ENCODE measurements at regions of chr16 and their contacts with region 1.

Region 1: GRCh38 chr16:19210280-19210924 is 42.4 kb downstream of the SYT17 start:
- DNase-seq: peak; percentile 89
- H3K4me3 ChIP-seq: peak overlapping the region; percentile 65
- H3K27ac ChIP-seq: peak overlapping the region; percentile 99
- H3K4me1 ChIP-seq: peaks cover 50% of the 10 kb centered on the region
- CTCF ChIP-seq: peak; percentile 60

Region 2: GRCh38 chr16:19316846-19317245 is 106.4 kb after region 1 on chr16:
- CTCF ChIA-PET with region 1: no interaction called
- POLR2A ChIA-PET with region 1: no interaction called
- intact Hi-C with region 1: no loop called
- DNase-seq: no peak
- H3K4me3 ChIP-seq: no peak overlapping the region
- H3K27ac ChIP-seq: no peak overlapping the region
- H3K4me1 ChIP-seq: no peaks in the 10 kb centered on the region
- CTCF ChIP-seq: no peak

Region 3: DNA sequence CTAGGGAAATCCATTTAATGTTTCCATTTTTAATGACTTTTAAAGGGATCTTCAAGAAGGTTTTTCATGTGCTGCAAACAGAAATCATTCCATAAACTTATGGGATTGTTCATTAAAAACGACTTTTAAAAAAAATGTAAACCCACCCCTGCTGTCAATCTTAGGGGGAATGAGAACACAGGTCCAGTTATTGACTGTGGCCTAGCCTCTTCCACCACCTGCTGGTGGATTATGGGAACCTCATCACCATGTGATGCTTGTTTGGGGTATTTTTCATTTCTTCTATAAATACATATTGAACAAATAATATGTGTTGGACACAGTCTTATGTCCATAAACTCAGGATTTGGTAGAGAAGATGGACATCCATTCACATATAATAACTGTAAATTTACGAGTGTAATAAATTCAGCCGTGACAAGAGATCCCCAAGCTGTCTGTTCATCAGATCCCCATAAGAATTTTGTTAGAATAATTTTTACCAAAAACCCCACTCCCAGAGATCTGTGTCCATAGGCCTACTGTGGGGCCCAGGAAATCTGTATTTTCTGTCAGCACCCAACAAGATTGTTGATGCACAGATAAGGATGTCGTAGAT is 165.3 kb after region 1 on chr16:
- CTCF ChIA-PET with region 1: no interaction called
- POLR2A ChIA-PET with region 1: no interaction called
- intact Hi-C with region 1: loop called (anchors 2 kb)
- DNase-seq: peak; percentile 78
- H3K4me3 ChIP-seq: no peak overlapping the region
- H3K27ac ChIP-seq: no peak overlapping the region
- H3K4me1 ChIP-seq: peaks cover 12% of the 10 kb centered on the region
- CTCF ChIP-seq: peak; percentile 97

Region 4: DNA sequence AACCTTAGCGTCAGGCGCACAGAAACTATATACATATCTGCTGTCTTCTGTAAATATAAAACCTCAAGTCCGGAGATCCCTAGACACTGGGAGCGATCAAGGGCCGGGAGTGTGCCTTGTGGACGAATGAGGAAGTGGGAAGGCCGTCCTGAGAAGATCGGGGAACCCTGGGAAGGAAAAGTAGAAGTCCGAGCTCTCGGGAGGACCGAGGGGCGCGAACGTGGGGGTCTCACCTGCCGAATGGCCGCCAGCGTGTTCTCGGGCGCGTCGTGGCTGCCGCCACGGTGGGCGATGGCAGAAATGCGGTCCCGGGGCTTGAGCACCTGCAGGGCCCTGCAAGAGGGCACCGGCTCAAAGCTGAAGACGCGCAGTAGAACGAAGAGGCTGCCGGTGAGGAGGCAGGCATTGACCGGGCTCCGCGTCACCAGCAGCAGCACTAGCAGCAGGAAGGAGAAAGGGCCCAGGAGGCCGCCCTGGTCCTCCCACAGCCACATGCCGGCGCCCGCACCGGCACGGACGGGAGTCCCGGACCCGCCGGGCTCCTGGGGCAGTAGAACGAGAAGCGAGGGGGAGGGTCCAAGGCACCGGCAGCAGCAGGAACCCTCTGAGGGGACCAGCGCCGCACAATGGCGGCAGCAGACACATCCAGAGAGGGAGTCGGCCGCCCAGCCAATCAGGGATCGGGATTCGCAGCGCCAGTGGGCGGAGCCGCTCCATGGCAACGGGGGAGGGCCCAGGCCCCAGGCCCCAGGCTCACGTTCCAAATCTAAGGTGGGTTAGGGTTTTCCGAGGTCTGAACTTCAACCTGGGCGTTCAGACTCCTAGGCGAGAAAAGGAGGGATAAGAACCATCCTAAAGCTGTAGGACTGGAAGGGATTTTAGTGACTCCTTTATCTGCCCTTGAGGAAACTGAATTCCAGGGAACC is 311.3 kb after region 1 on chr16 and contains the start of gene GDE1:
- CTCF ChIA-PET with region 1: no interaction called
- POLR2A ChIA-PET with region 1: no interaction called
- intact Hi-C with region 1: loop called (anchors 5 kb)
- DNase-seq: peak; percentile 94
- H3K4me3 ChIP-seq: peak within 1 kb of the TSS; percentile 83
- H3K27ac ChIP-seq: peak within 1 kb of the TSS; percentile 70
- H3K4me1 ChIP-seq: peaks cover 52% of the 10 kb centered on the region
- CTCF ChIP-seq: peak; percentile 62
- total RNA-seq, gene GDE1: 18.5 and 23.4 TPM in 2 replicates

Measured in OCI-LY7 (cell line).